Activated CD4-positive, alpha-beta memory T cell treated with anti-CD3 and anti-CD28 coated beads for 36 hours (primary cell): ENCODE measurements at regions of chr12 and their contacts with region 1.

Region 1: DNA sequence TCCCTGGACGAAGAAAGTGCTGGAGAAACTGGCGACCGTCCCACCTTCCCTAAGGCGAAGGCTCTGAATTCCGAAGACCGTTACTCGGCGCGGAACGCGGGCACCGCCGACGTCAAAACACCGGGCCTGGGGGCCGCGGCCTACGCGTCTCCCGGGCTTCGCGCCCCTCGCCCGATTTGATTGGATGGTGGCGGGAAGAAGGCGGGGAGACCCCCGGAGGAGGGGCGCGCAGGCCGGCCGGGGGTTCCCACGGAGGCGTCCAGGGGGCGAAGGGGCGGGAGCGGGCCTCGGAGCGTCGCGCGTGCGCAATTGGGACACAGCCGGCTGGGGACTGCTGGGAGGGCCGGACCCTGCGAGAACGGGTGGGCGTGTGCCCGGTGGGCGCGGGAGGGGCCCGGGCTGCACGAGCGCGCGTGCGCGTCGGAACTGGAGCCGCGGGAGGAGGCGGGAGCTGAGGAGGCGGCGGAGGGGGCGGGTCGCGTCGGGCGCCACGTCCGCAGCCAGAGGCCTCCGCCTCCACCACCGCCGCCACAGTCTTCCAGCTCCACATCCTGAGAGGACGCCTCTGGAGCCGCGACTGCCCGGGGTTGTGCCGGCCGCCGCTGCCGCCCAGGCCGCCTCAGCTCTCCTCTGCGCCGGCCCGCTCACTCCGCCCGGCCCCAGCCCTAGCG is at the start of gene TMEM263:
- DNase-seq: peak; percentile 94
- H3K4me3 Mint-ChIP-seq: peak within 1 kb of the TSS; percentile 96
- H3K27ac Mint-ChIP-seq: peak within 1 kb of the TSS; percentile 86
- H3K4me1 Mint-ChIP-seq: peaks cover 16% of the 10 kb centered on the region
- H3K27me3 Mint-ChIP-seq: no peaks in the 10 kb centered on the region
- total RNA-seq, gene TMEM263: 37.8 to 38.3 TPM

Region 2: GRCh38 chr12:106986625-106987430 is 31.3 kb after region 1 on chr12 and contains the start of gene MTERF2:
- CTCF ChIA-PET with region 1: no interaction called
- POLR2A ChIA-PET with region 1: interaction called, 10 read pairs
- intact Hi-C with region 1: loop called (anchors 1 kb)
- DNase-seq: peak; percentile 90
- H3K4me3 Mint-ChIP-seq: peak within 1 kb of the TSS; percentile 88
- H3K27ac Mint-ChIP-seq: peak within 1 kb of the TSS; percentile 70
- H3K4me1 Mint-ChIP-seq: peaks cover 39% of the 10 kb centered on the region
- H3K27me3 Mint-ChIP-seq: no peaks in the 10 kb centered on the region
- total RNA-seq, gene MTERF2: 5.6 to 5.7 TPM

Region 3: DNA sequence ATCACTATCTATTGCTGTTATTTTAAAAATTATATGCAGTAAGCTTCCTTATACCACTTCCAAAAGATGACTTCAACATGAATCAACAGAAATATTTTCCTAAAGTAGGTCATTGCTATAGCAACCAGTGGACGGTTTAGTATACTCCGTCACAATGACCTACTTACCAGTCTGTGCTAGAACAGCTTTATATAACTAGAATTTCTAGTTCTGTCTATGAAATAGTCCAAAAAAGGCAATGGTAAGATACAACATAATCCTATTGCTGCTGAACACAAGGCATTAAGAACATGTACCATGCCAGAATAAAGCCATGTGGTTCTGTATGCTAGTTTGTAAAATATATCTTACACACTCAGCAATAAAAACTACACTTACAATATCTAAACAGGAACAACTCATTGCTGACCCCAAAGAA is 72.1 kb after region 1 on chr12:
- CTCF ChIA-PET with region 1: interaction called, 3 read pairs
- POLR2A ChIA-PET with region 1: no interaction called
- intact Hi-C with region 1: loop called (anchors 2 kb)
- DNase-seq: no peak
- H3K4me3 Mint-ChIP-seq: peak overlapping the region; percentile 3
- H3K27ac Mint-ChIP-seq: peak overlapping the region; percentile 89
- H3K4me1 Mint-ChIP-seq: peaks cover 67% of the 10 kb centered on the region
- H3K27me3 Mint-ChIP-seq: no peaks in the 10 kb centered on the region

Region 4: DNA sequence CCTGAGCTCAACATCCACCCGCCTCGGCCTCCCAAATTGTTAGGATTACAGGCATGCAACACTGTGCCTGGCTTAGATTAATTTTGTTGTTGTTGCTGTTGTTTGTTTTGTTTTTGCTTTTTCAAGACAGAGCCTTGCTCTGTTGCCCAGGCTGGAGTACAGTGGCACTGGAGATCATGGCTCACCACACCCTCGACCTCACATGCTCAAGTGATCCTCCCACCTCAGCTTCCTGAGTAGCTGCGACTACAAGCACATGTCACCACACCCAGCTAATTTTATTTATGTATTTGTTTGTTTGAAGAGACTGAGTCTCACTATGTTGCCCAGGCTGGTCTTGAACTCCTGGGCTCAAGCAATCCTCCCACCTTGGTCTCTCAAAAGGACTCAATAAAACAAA is 111.2 kb after region 1 on chr12:
- CTCF ChIA-PET with region 1: no interaction called
- POLR2A ChIA-PET with region 1: no interaction called
- intact Hi-C with region 1: no loop called
- DNase-seq: no peak
- H3K4me3 Mint-ChIP-seq: no peak overlapping the region
- H3K27ac Mint-ChIP-seq: no peak overlapping the region
- H3K4me1 Mint-ChIP-seq: peaks cover 2% of the 10 kb centered on the region
- H3K27me3 Mint-ChIP-seq: no peaks in the 10 kb centered on the region

Region 5: GRCh38 chr12:107152315-107152714 is 196.8 kb after region 1 on chr12:
- CTCF ChIA-PET with region 1: no interaction called
- POLR2A ChIA-PET with region 1: no interaction called
- intact Hi-C with region 1: no loop called
- DNase-seq: no peak
- H3K4me3 Mint-ChIP-seq: no peak overlapping the region
- H3K27ac Mint-ChIP-seq: no peak overlapping the region
- H3K4me1 Mint-ChIP-seq: no peaks in the 10 kb centered on the region
- H3K27me3 Mint-ChIP-seq: peaks cover 10% of the 10 kb centered on the region